Right ventricle myocardium superior (tissue), 1 donor: ENCODE measurements at regions of chr10 and their contacts with region 1.

Region 1: GRCh38 chr10:88932539-88933256 is 19.9 kb downstream of the ACTA2 start:
- DNase-seq: no peak
- ATAC-seq: peak; percentile 78

Region 2: GRCh38 chr10:88392222-88392621 is 540.5 kb before region 1 on chr10:
- intact Hi-C with region 1: no loop called
- DNase-seq: no peak
- ATAC-seq: no peak

Region 3: GRCh38 chr10:88986549-88987242 is 54.0 kb after region 1 on chr10:
- intact Hi-C with region 1: loop called (anchors 2 kb)
- DNase-seq: no peak
- ATAC-seq: no peak

Region 4: GRCh38 chr10:89185658-89186057 is 253.0 kb after region 1 on chr10:
- intact Hi-C with region 1: no loop called
- DNase-seq: no peak
- ATAC-seq: no peak

Region 5: GRCh38 chr10:89217057-89217990 is 284.6 kb after region 1 on chr10:
- intact Hi-C with region 1: loop called (anchors 5 kb)
- DNase-seq: no peak
- ATAC-seq: peak; percentile 70